MCF 10A (cell line): ENCODE measurements at regions of chr2 and their contacts with region 1.

Region 1: DNA sequence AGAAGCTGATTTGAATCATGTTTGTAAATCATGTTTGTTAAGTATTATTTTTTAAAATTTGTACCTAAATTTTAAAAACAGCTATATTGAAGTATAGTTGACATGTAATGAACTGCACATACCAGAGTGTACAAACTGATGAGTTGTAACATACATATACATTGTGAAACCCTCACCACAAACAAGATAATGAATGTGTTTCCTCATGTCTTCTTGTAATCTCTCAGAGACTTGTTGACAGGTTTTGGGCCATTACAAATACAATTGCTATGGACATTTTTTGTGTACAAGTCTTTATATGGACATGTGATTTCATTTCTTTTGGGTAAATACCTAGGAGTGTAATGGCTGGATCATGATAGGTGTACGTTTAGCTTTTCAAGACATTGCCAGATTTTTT is 21.5 kb downstream of the WDR43 start:
- DNase-seq: no peak
- H3K4me3 Mint-ChIP-seq: no peak overlapping the region
- H3K27ac Mint-ChIP-seq: peak overlapping the region; percentile 78
- H3K4me1 Mint-ChIP-seq: peaks cover 8% of the 10 kb centered on the region
- H3K27me3 Mint-ChIP-seq: no peaks in the 10 kb centered on the region
- CTCF ChIP-seq: no peak

Region 2: GRCh38 chr2:28927878-28928277 is 11.9 kb after region 1 on chr2:
- CTCF ChIA-PET with region 1: interaction called, 3 read pairs
- POLR2A ChIA-PET with region 1: interaction called, 11 read pairs
- intact Hi-C with region 1: no loop called
- DNase-seq: no peak
- H3K4me3 Mint-ChIP-seq: no peak overlapping the region
- H3K27ac Mint-ChIP-seq: peak overlapping the region; percentile 80
- H3K4me1 Mint-ChIP-seq: peaks cover 21% of the 10 kb centered on the region
- H3K27me3 Mint-ChIP-seq: no peaks in the 10 kb centered on the region
- CTCF ChIP-seq: no peak

Region 3: GRCh38 chr2:29322011-29322410 is 406.1 kb after region 1 on chr2:
- CTCF ChIA-PET with region 1: no interaction called
- POLR2A ChIA-PET with region 1: no interaction called
- intact Hi-C with region 1: no loop called
- DNase-seq: no peak
- H3K4me3 Mint-ChIP-seq: no peak overlapping the region
- H3K27ac Mint-ChIP-seq: no peak overlapping the region
- H3K4me1 Mint-ChIP-seq: peaks cover 2% of the 10 kb centered on the region
- H3K27me3 Mint-ChIP-seq: peaks cover 17% of the 10 kb centered on the region
- CTCF ChIP-seq: no peak